Left ventricle myocardium inferior (tissue), 1 donor: ENCODE measurements at regions of chr1 and their contacts with region 1.

Region 1: DNA sequence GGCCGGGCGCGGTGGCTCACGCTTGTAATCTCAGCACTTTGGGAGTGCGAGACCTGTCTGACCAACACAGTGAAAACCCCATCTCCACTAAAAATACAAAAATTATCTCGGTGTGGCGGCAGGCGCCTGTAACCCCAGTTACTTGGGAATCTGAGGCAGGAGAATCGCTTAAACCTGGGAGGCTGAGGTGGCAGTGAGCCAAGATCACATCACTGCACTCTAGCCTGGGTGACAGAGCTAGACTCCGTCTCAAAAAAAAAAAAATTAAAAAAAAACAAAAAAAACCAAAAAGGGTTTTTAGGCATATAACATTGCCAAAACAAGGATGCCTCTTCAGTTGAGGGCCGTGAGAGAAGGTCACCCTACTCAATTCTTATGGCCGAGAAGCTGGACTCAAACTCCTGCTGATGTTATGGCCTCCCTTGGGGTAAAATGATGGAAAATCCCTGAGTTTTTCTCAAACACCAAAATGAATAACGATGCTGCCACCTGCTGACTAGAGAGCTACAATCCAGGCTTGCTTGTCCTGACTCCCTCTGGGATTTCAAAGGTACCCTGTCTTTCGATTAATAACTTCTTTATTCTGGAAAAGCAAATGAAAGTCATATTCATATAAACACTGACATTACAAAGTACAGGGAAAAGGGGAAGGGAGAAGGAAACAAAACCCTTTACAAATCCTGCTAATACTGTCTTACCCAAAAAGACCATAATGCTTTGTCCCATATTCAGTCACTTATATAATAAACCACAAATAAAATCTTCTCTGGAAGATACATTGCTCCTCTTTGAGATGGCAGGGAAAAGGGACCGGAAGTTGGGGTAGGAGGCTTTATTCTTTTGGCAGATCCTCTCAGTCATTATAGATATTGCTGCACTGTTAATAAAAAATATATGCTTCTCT is 10.7 kb downstream of the RAB42 start:
- DNase-seq: no peak
- H3K4me3 ChIP-seq: no peak overlapping the region
- H3K27ac ChIP-seq: peak overlapping the region; percentile 9
- H3K4me1 ChIP-seq: peaks cover 9% of the 10 kb centered on the region
- H3K27me3 ChIP-seq: no peaks in the 10 kb centered on the region
- CTCF ChIP-seq: peak; percentile 74

Region 2: GRCh38 chr1:28359592-28360239 is 243.1 kb before region 1 on chr1:
- intact Hi-C with region 1: loop called (anchors 10 kb)
- DNase-seq: peak; percentile 64
- H3K4me3 ChIP-seq: no peak overlapping the region
- H3K27ac ChIP-seq: no peak overlapping the region
- H3K4me1 ChIP-seq: no peaks in the 10 kb centered on the region
- H3K27me3 ChIP-seq: no peaks in the 10 kb centered on the region
- CTCF ChIP-seq: peak; percentile 77

Region 3: DNA sequence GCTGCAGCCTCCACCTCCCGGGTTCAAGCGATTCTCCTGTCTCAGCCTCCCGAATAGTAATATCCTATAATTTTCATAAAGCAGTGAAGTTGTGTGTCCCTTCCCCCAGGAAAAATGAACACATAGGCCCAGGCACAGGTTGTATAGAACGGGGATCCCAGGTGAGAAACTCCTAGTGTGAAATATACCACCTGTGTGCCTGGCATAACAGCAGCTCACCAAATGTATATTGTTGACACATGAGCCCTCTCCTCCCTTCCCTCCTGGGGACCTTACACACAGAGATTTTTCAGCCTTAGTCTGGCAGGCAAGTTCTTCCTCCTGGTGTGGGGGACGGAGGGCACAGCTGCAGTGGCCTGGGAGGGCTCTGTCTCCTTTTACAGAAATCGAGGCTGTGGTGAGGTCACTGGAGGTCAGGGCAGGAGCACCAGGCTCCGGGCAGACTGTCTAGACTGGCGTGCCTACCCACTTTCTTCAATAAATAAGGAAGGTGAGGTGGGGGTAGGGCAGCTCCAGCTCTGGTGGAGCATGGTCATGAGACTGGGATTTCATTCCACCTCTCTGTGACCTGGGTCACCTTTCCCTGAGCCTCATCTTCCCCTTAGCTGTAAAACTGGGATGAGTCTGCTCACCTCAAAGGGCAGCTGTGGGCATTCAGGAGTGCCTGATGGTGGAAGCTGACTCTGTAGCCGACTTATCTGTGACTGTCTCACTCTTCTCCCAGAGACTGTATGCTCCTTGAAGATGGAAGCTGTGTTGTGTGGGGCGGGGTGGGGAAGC is 82.7 kb before region 1 on chr1:
- intact Hi-C with region 1: loop called (anchors 2 kb)
- DNase-seq: no peak
- H3K4me3 ChIP-seq: no peak overlapping the region
- H3K27ac ChIP-seq: no peak overlapping the region
- H3K4me1 ChIP-seq: peaks cover 16% of the 10 kb centered on the region
- H3K27me3 ChIP-seq: no peaks in the 10 kb centered on the region
- CTCF ChIP-seq: no peak

Region 4: GRCh38 chr1:28684937-28685336 is 82.1 kb after region 1 on chr1:
- intact Hi-C with region 1: no loop called
- DNase-seq: no peak
- H3K4me3 ChIP-seq: no peak overlapping the region
- H3K27ac ChIP-seq: no peak overlapping the region
- H3K4me1 ChIP-seq: no peaks in the 10 kb centered on the region
- H3K27me3 ChIP-seq: no peaks in the 10 kb centered on the region
- CTCF ChIP-seq: no peak

Region 5: GRCh38 chr1:28703629-28704028 is 100.8 kb after region 1 on chr1:
- intact Hi-C with region 1: no loop called
- DNase-seq: no peak
- H3K4me3 ChIP-seq: no peak overlapping the region
- H3K27ac ChIP-seq: no peak overlapping the region
- H3K4me1 ChIP-seq: no peaks in the 10 kb centered on the region
- H3K27me3 ChIP-seq: no peaks in the 10 kb centered on the region
- CTCF ChIP-seq: no peak